A673 (cell line): ENCODE measurements at regions of chr7 and their contacts with region 1.

Region 1: GRCh38 chr7:77415823-77416622 is at the start of gene GSAP:
- DNase-seq: no peak
- H3K4me3 ChIP-seq: peak within 1 kb of the TSS; percentile 39
- H3K27ac ChIP-seq: no peak within 1 kb of the TSS
- H3K4me1 ChIP-seq: no peaks in the 10 kb centered on the region
- H3K27me3 ChIP-seq: peaks cover 32% of the 10 kb centered on the region
- CTCF ChIP-seq: no peak
- total RNA-seq, gene GSAP: 0.15 TPM in 2 replicates

Region 2: DNA sequence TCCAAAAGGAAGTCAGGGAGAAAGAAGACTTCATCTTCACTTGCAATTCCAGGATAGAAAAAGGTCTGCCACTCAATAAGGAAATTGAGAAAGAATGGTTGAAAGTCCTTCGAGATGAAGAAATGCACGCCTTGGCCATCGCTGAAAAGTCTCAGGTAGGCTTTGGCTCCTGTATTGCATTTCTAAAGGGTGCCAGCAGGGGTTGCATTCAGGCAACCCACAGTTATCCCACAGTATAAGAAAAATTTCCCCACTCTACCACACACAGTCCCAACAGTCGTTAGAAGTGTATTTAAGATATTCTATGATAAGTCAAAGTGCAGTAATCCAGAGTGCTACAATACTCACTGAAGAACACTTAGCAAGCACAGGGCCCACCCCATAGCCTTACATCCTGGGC is 123.0 kb before region 1 on chr7:
- CTCF ChIA-PET with region 1: no interaction called
- POLR2A ChIA-PET with region 1: no interaction called
- intact Hi-C with region 1: no loop called
- DNase-seq: no peak
- H3K4me3 ChIP-seq: no peak overlapping the region
- H3K27ac ChIP-seq: no peak overlapping the region
- H3K4me1 ChIP-seq: no peaks in the 10 kb centered on the region
- H3K27me3 ChIP-seq: no peaks in the 10 kb centered on the region
- CTCF ChIP-seq: no peak

Region 3: GRCh38 chr7:77315182-77315591 is 100.8 kb before region 1 on chr7:
- CTCF ChIA-PET with region 1: no interaction called
- POLR2A ChIA-PET with region 1: no interaction called
- intact Hi-C with region 1: no loop called
- DNase-seq: no peak
- H3K4me3 ChIP-seq: no peak overlapping the region
- H3K27ac ChIP-seq: no peak overlapping the region
- H3K4me1 ChIP-seq: no peaks in the 10 kb centered on the region
- H3K27me3 ChIP-seq: no peaks in the 10 kb centered on the region
- CTCF ChIP-seq: no peak

Region 4: GRCh38 chr7:77403957-77404356 is 12.1 kb before region 1 on chr7:
- CTCF ChIA-PET with region 1: no interaction called
- POLR2A ChIA-PET with region 1: interaction called, 15 read pairs
- intact Hi-C with region 1: no loop called
- DNase-seq: no peak
- H3K4me3 ChIP-seq: no peak overlapping the region
- H3K27ac ChIP-seq: no peak overlapping the region
- H3K4me1 ChIP-seq: no peaks in the 10 kb centered on the region
- H3K27me3 ChIP-seq: no peaks in the 10 kb centered on the region
- CTCF ChIP-seq: no peak

Region 5: DNA sequence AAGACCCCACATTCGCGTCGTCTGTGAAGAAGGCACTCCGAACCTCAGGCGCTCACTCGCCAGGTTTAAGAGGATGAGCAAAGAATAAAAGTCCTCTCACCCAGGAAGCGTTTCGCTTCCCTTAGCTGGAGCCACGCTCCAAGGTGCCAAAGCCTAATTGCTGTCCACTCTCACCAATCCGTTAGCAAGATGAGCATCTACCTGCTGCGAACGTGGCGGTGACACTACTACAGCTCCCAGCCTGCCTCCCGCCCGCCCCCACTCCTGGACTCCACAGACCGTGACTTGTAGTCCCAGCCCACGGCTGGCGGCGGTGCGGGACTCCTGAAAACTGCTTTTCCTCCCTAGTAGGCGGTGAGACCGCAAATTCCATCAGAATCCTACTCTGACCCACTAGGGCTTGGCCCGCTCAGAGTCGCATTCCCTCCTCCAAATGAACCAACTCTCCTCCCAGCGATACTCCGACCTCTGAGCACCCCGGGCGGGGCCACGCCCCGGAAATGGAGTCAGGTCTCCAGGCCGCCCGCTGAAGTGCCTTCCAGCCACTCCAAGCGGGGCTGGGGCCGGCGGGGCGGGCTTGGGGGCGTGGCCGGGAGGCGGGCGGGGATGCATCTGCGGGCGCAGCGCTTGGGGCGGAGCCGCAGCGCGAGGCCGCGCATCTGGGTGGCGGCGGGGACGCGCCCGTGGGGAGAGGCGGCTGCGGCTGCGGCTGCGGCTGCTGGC is 120.6 kb after region 1 on chr7:
- CTCF ChIA-PET with region 1: no interaction called
- POLR2A ChIA-PET with region 1: no interaction called
- intact Hi-C with region 1: no loop called
- DNase-seq: peak; percentile 98
- H3K4me3 ChIP-seq: peak overlapping the region; percentile 82
- H3K27ac ChIP-seq: peak overlapping the region; percentile 76
- H3K4me1 ChIP-seq: no peaks in the 10 kb centered on the region
- H3K27me3 ChIP-seq: no peaks in the 10 kb centered on the region
- CTCF ChIP-seq: no peak

Region 6: GRCh38 chr7:77759294-77759889 is 343.4 kb after region 1 on chr7:
- CTCF ChIA-PET with region 1: no interaction called
- POLR2A ChIA-PET with region 1: no interaction called
- intact Hi-C with region 1: no loop called
- DNase-seq: peak; percentile 68
- H3K4me3 ChIP-seq: no peak overlapping the region
- H3K27ac ChIP-seq: no peak overlapping the region
- H3K4me1 ChIP-seq: no peaks in the 10 kb centered on the region
- H3K27me3 ChIP-seq: no peaks in the 10 kb centered on the region
- CTCF ChIP-seq: peak; percentile 88